Activated CD4-positive, alpha-beta T cell treated with anti-CD3 and anti-CD28 coated beads, Interleukin-2, amount 10 ng/mL, durations not matched to agents 7 days and 5 days (primary cell): ENCODE measurements at regions of chr1 and their contacts with region 1.

Region 1: GRCh38 chr1:46635205-46635604 is 18.6 kb upstream of the MOB3C start:
- DNase-seq: no peak
- H3K4me3 Mint-ChIP-seq: no peak overlapping the region
- H3K27ac Mint-ChIP-seq: no peak overlapping the region
- H3K4me1 Mint-ChIP-seq: peaks cover 2% of the 10 kb centered on the region
- H3K27me3 Mint-ChIP-seq: no peaks in the 10 kb centered on the region

Region 2: DNA sequence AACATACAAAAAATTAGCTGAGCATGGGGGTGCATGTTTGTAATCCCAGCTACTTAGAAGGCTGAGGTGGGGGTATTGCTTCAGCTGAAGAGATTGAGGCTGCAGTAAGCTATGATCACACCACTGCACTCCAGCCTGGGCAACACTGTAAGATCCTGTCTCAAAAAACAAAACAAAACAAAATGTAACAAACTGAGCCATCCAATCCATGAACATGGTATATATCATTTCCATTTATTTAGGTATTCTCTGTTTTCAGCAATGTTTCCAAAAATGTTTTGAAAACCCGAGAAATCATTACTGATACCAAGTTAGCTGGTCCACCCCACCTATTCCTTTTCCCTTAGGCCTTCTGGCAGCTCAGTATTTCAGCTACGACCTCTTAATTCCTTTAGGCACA is 14.6 kb after region 1 on chr1:
- CTCF ChIA-PET with region 1: interaction called, 11 read pairs
- POLR2A ChIA-PET with region 1: interaction called, 3 read pairs
- DNase-seq: no peak
- H3K4me3 Mint-ChIP-seq: no peak overlapping the region
- H3K27ac Mint-ChIP-seq: no peak overlapping the region
- H3K4me1 Mint-ChIP-seq: peaks cover 12% of the 10 kb centered on the region
- H3K27me3 Mint-ChIP-seq: no peaks in the 10 kb centered on the region